CD8-positive, alpha-beta T cell (primary cell): ENCODE measurements at regions of chr14 and their contacts with region 1.

Region 1: GRCh38 chr14:51963286-51963685 is 26.1 kb upstream of the RTRAF start:
- DNase-seq: peak in 1 of 9 experiments; percentile 51
- ATAC-seq: peak; percentile 70
- H3K4me3 ChIP-seq: no peak overlapping the region
- H3K4me3 Mint-ChIP-seq: peak overlapping the region; percentile 64
- H3K27ac ChIP-seq: peak overlapping the region in 1 of 2 experiments; percentile 23
- H3K27ac Mint-ChIP-seq: peak overlapping the region; percentile 86
- H3K4me1 ChIP-seq: peaks cover 26% of the 10 kb centered on the region
- H3K4me1 Mint-ChIP-seq: peaks cover 48% of the 10 kb centered on the region
- H3K27me3 ChIP-seq: no peaks in the 10 kb centered on the region
- H3K27me3 Mint-ChIP-seq: no peaks in the 10 kb centered on the region
- CTCF ChIP-seq: no peak

Region 2: GRCh38 chr14:51922624-51923023 is 40.7 kb before region 1 on chr14:
- CTCF ChIA-PET with region 1: no interaction called
- POLR2A ChIA-PET with region 1: no interaction called
- intact Hi-C with region 1: no loop called
- DNase-seq: no peak
- ATAC-seq: no peak
- H3K4me3 ChIP-seq: no peak overlapping the region
- H3K4me3 Mint-ChIP-seq: no peak overlapping the region
- H3K27ac ChIP-seq: peak overlapping the region in 1 of 2 experiments; percentile 17
- H3K27ac Mint-ChIP-seq: peak overlapping the region; percentile 70
- H3K4me1 ChIP-seq: peaks cover 31% of the 10 kb centered on the region
- H3K4me1 Mint-ChIP-seq: peaks cover 62% of the 10 kb centered on the region
- H3K27me3 ChIP-seq: no peaks in the 10 kb centered on the region
- H3K27me3 Mint-ChIP-seq: no peaks in the 10 kb centered on the region
- CTCF ChIP-seq: no peak

Region 3: DNA sequence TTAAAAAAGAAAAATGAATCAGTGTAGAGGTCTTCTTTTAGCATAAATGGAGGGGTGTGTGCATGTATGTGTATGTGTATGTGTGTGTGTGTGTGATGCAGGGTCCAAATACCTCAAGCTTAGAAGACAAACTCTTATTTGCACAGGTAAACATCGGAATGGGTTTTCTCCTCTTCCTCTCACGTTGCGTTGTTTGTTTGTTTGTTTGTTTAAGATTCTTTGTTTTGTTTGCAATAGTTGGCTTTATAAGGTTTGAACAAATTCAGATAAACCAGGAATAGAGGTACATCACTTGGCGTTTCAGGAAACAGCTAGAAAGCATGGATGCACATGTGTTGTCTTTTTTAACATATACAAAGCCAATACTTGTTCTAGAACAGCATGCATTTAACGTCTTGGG is 17.6 kb before region 1 on chr14:
- CTCF ChIA-PET with region 1: no interaction called
- POLR2A ChIA-PET with region 1: no interaction called
- intact Hi-C with region 1: loop called in 1 of 2 experiments (anchors 2 kb)
- DNase-seq: no peak
- ATAC-seq: no peak
- H3K4me3 ChIP-seq: no peak overlapping the region
- H3K4me3 Mint-ChIP-seq: no peak overlapping the region
- H3K27ac ChIP-seq: no peak overlapping the region
- H3K27ac Mint-ChIP-seq: no peak overlapping the region
- H3K4me1 ChIP-seq: no peaks in the 10 kb centered on the region
- H3K4me1 Mint-ChIP-seq: peaks cover 48% of the 10 kb centered on the region
- H3K27me3 ChIP-seq: no peaks in the 10 kb centered on the region
- H3K27me3 Mint-ChIP-seq: no peaks in the 10 kb centered on the region
- CTCF ChIP-seq: no peak

Region 4: DNA sequence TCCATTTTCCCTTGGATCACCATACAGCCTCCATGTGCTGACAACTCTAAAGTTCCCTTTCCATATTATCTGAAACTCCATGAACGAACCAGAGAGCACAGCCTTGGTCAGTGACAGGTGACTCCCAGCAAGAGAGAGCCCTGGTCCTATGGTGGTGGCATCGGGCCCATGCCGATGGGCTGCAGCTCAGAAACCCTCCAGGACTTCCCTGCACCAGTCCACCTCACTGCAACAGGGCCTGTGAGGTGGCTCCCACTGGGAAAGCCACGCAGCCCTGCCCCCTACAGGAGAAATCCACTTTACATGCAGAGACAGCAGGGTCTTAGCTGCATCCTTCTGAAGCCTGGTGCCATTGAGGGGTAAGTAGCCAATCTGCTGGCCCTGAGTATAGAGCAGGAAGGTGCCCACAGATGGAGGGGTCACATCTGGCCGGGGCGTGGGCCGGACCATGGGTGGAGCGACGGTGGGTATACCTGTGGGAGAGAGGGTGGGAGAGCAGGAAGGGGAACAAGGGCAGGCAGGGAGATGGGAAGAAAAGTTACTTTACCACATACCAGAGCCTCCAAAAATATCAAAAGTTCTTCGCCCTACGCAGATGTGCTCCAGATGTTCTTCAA is 50.8 kb after region 1 on chr14:
- CTCF ChIA-PET with region 1: no interaction called
- POLR2A ChIA-PET with region 1: no interaction called
- intact Hi-C with region 1: loop called in 1 of 2 experiments (anchors 2 kb)
- DNase-seq: peak in 2 of 9 experiments; percentile 11 to 13
- ATAC-seq: no peak
- H3K4me3 ChIP-seq: no peak overlapping the region
- H3K4me3 Mint-ChIP-seq: no peak overlapping the region
- H3K27ac ChIP-seq: no peak overlapping the region
- H3K27ac Mint-ChIP-seq: no peak overlapping the region
- H3K4me1 ChIP-seq: no peaks in the 10 kb centered on the region
- H3K4me1 Mint-ChIP-seq: no peaks in the 10 kb centered on the region
- H3K27me3 ChIP-seq: no peaks in the 10 kb centered on the region
- H3K27me3 Mint-ChIP-seq: peaks cover 5% of the 10 kb centered on the region
- CTCF ChIP-seq: no peak